Posterior vena cava (tissue), 2 donors: ENCODE measurements at regions of chr13 and their contacts with region 1.

Region 1: GRCh38 chr13:43229506-43229905 is 206.1 kb downstream of the DNAJC15 start:
- DNase-seq: no peak

Region 2: GRCh38 chr13:42039946-42040729 is 1189.4 kb before region 1 on chr13:
- intact Hi-C with region 1: no loop called
- DNase-seq: peak; percentile 97

Region 3: DNA sequence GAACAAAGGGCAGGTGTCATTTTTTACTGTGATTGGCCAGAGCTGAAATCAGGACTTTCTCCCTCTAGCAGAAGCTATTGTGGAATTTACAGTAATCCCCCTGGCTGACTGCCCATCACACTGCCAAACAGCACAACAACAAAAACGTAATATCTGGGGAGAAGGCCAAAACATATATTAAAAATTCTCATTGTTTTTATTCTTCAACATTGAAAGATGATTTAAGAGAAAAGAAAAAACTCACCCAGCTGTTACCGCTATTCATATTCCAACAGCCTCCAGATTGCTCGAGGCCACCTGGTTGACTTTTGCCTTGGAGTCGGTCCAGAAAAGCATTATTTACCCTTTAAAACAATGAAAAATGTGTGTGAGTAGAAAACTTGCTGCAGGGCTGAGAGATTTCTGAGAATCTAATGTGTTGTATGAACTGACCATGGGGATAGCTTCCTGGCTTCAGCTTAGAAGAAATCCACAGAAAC is 334.7 kb before region 1 on chr13:
- intact Hi-C with region 1: loop called in 1 of 2 experiments (anchors 5 kb)
- DNase-seq: no peak